Mammary epithelial cell (primary cell): ENCODE measurements at regions of chr9 and their contacts with region 1.

Region 1: DNA sequence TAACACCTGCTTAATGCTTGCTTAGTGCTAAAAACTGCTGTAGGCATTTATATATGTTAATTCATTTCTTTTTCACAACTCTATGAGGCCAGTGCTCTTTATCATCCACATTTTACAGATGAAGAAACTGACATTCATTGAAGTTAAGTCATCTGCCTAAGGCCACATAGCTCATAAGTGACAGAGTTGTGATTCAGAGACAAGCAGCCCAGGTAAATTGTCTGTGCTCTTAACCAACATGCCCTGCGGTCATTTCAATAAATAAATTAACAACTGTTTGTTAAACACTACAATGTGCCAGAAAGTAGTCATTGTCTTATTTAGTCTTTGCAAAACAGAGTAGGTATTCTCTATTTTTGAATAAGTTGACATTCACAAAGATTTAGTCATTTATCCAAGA is 1354.4 kb upstream of the C9orf72 start:
- DNase-seq: peak; percentile 94
- H3K4me3 ChIP-seq: no peak overlapping the region
- H3K27ac ChIP-seq: peak overlapping the region; percentile 56
- H3K4me1 ChIP-seq: peaks cover 66% of the 10 kb centered on the region
- H3K27me3 ChIP-seq: no peaks in the 10 kb centered on the region
- CTCF ChIP-seq: no peak

Region 2: DNA sequence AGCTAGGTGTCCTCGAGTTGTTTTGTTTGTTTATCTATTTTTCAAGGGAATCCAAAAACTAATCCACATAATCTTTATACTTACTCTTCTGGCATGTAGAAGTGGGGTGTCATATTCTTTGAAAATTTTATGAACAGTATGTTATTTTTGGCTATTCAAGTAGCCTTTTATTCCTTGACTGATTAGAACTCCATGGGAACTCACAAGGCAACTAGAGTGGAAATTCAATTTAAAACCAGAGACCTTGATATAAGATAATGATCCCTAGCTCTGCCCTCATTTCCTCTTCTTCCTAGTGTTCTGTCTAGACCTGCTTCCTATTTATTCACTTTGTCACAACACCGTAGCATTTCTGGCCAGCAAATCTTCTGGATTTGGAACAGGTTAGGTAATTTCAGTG is 230.8 kb before region 1 on chr9:
- CTCF ChIA-PET with region 1: no interaction called
- dilution Hi-C with region 1: no loop called
- in situ Hi-C with region 1: no loop called
- intact Hi-C with region 1: no loop called
- DNase-seq: no peak
- H3K4me3 ChIP-seq: no peak overlapping the region
- H3K27ac ChIP-seq: no peak overlapping the region
- H3K4me1 ChIP-seq: no peaks in the 10 kb centered on the region
- H3K27me3 ChIP-seq: no peaks in the 10 kb centered on the region
- CTCF ChIP-seq: no peak

Region 3: DNA sequence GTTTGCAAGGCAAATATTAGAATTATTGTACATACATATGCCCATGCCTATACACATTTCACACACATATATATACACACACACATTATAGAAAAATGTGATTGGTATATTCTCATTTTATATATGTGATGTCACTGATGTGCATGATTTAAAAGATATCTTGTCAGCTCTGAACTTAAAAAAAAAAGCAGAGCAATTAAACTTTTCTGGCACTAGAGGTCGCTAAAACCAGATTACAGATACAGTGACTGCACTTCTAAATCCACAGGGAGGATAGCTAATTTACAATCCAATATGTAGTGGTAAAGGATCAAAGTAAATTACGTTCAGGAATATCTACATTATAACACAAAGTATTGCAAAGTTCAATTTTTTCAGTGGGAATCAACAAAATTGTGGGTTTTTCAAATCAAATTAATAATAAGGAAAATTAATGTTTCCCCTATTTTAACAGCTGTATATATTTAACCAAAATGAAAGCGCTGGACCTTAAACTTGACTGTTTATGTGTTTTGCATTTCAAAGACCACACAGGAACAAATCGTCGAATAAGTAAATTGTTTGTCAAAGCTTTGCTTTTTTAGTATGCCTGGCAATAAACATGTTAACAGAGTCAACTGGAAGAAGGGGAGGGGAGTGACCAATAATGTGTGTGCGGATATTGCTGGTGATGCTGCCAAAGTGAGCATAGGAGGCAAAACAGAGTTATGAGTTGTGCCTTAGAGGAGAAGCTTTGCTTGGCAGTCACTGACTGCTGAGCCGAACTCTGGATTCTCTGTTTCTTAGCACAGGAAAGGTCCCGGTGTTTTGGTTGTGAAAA is 153.1 kb before region 1 on chr9:
- CTCF ChIA-PET with region 1: no interaction called
- dilution Hi-C with region 1: no loop called
- in situ Hi-C with region 1: no loop called
- intact Hi-C with region 1: loop called (anchors 5 kb)
- DNase-seq: peak; percentile 36
- H3K4me3 ChIP-seq: no peak overlapping the region
- H3K27ac ChIP-seq: no peak overlapping the region
- H3K4me1 ChIP-seq: peaks cover 6% of the 10 kb centered on the region
- H3K27me3 ChIP-seq: no peaks in the 10 kb centered on the region
- CTCF ChIP-seq: peak; percentile 67 to 69

Region 4: DNA sequence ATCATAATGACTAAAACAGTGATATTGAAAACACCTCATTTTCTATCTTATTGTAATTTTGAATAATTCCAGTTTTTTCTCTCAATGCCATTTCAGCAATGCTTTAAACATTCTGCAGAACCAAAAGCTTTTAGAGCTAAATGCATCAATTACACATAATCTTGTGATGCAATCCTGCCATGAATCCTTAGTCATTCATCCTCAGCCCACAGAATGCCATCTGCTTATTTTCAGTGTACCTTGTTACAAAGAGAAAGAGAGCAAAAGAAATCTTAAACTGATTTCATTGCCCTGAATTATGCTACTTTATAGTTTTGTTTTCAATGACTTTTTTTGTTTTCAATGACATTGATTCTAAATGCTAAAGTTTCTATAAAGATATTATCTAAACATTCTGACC is 119.7 kb before region 1 on chr9:
- CTCF ChIA-PET with region 1: no interaction called
- dilution Hi-C with region 1: no loop called
- in situ Hi-C with region 1: no loop called
- intact Hi-C with region 1: loop called (anchors 5 kb)
- DNase-seq: peak; percentile 76
- H3K4me3 ChIP-seq: no peak overlapping the region
- H3K27ac ChIP-seq: peak overlapping the region; percentile 26
- H3K4me1 ChIP-seq: peaks cover 30% of the 10 kb centered on the region
- H3K27me3 ChIP-seq: no peaks in the 10 kb centered on the region
- CTCF ChIP-seq: no peak

Region 5: DNA sequence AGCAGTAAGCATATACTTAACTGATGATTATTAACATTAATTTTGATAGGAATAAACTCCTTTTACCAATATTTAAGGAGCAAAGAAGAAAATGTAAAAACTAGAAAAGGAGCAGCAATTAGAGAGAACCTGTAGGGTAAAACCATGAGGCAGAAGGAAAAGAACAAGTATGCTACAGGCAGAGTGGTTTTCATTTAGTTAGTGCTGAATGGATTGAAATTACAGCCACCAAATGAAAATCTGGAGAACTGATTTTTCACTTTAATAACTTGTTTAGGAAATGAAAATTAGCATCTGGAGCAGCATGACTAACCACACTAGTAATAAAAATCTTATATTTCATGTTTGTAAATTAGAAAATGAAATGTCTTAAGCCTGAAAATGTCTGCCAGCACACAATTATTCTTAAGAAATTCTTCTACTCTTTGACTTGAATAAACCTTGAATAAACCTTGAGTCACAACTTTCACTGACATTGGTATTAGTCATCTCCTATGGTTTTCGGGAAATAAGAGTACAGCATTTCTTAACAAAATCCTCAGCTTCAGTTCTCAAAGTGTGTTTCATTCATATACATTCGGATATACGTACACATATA is 150.5 kb after region 1 on chr9:
- CTCF ChIA-PET with region 1: no interaction called
- dilution Hi-C with region 1: no loop called
- in situ Hi-C with region 1: no loop called
- intact Hi-C with region 1: loop called (anchors 5 kb)
- DNase-seq: peak; percentile 82
- H3K4me3 ChIP-seq: peak overlapping the region in 2 of 3 experiments; percentile 13 to 29
- H3K27ac ChIP-seq: peak overlapping the region; percentile 68
- H3K4me1 ChIP-seq: peaks cover 12% of the 10 kb centered on the region
- H3K27me3 ChIP-seq: no peaks in the 10 kb centered on the region
- CTCF ChIP-seq: no peak